H1 (cell line): ENCODE measurements at regions of chr9 and their contacts with region 1.

Region 1: GRCh38 chr9:111759762-111760639 is 34.7 kb downstream of the SHOC1 start:
- DNase-seq: no peak
- H3K4me3 ChIP-seq: no peak overlapping the region
- H3K27ac ChIP-seq: no peak overlapping the region
- H3K4me1 ChIP-seq: no peaks in the 10 kb centered on the region
- H3K27me3 ChIP-seq: no peaks in the 10 kb centered on the region
- CTCF ChIP-seq: peak in 2 of 3 experiments; percentile 54 to 58; a peak in 3 of 4 replicates
- EP300 ChIP-seq: no peak
- POLR2A ChIP-seq: no peak
- RAD21 ChIP-seq: peak; percentile 90 to 92

Region 2: DNA sequence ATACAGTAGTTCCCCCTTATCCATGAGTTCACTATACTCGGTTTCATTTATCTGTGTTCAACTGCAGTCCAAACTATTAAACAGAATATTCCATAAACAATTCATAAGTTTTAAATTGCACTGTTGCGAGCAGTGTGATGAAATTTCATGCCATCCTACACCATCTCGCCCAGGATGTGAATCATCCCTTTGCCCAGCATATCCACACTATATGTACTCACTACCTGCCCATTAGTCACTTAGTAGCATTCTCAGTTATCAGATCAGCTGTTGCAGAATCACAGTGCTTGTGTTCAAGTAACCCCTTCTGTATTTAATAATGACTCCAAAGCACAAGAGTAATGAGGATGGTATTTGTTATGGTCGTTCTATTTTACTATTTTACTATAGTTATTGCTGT is 16.7 kb before region 1 on chr9:
- CTCF ChIA-PET with region 1: interaction called, 10 read pairs
- POLR2A ChIA-PET with region 1: no interaction called
- DNase-seq: no peak
- H3K4me3 ChIP-seq: no peak overlapping the region
- H3K27ac ChIP-seq: no peak overlapping the region
- H3K4me1 ChIP-seq: no peaks in the 10 kb centered on the region
- H3K27me3 ChIP-seq: no peaks in the 10 kb centered on the region
- CTCF ChIP-seq: no peak
- EP300 ChIP-seq: no peak
- POLR2A ChIP-seq: no peak
- RAD21 ChIP-seq: no peak

Region 3: GRCh38 chr9:112086627-112087026 is 326.6 kb after region 1 on chr9:
- CTCF ChIA-PET with region 1: interaction called, 11 read pairs
- POLR2A ChIA-PET with region 1: no interaction called
- DNase-seq: no peak
- H3K4me3 ChIP-seq: no peak overlapping the region
- H3K27ac ChIP-seq: no peak overlapping the region
- H3K4me1 ChIP-seq: no peaks in the 10 kb centered on the region; a peak in 1 of 7 replicates
- H3K27me3 ChIP-seq: no peaks in the 10 kb centered on the region
- CTCF ChIP-seq: peak in 2 of 3 experiments; percentile 48 to 56; a peak in 2 of 4 replicates
- EP300 ChIP-seq: no peak
- POLR2A ChIP-seq: no peak
- RAD21 ChIP-seq: peak; percentile 75 to 77